ENCODE measurements at regions of chr11 and their contacts with region 1.

Region 1: DNA sequence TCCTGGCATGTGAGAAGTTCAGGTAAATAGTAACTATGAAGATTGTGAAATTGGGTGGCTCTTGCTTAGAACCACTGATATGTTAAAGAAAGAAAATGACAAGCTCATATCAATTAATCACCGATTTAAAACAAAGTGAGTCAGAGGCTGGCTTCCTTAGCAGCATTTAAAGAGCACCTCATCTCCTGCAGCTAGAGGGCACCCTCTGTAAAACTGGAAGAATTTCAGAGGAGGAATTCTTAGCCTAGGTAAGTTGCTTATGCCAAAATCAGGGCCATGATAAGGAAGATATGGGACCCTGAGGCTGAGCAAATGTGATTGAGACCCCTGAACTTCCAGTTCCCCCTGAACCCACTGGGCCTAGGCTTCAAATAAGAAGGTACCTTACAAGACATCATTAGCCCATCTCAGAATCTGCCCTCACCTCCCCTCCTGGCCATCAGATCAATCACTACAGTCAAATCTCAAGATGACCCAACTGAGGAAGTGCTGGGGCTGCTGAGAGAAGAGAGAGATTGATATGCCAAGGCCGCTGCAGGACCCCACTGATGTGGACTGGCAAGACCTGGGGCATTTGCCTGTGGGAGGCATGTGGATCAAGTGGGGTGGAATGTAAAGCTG is 8.6 kb upstream of the CD3E start:
- DNase-seq: peak in 27 of 35 experiments; percentile 8 to 76 (median 36)
- ATAC-seq: peak; percentile 79 to 83 (median 80)
- H3K4me3 ChIP-seq: no peak overlapping the region
- H3K4me3 Mint-ChIP-seq: no peak overlapping the region
- H3K27ac ChIP-seq: peak overlapping the region; percentile 14
- H3K27ac Mint-ChIP-seq: peak overlapping the region; percentile 79 to 80
- H3K4me1 ChIP-seq: peaks cover 0 to 8% of the 10 kb centered on the region in 2 experiments
- H3K4me1 Mint-ChIP-seq: peaks cover 21 to 22% (median 22%) of the 10 kb centered on the region in 3 donors
- H3K27me3 ChIP-seq: no peaks in the 10 kb centered on the region
- H3K27me3 Mint-ChIP-seq: no peaks in the 10 kb centered on the region

Region 2: DNA sequence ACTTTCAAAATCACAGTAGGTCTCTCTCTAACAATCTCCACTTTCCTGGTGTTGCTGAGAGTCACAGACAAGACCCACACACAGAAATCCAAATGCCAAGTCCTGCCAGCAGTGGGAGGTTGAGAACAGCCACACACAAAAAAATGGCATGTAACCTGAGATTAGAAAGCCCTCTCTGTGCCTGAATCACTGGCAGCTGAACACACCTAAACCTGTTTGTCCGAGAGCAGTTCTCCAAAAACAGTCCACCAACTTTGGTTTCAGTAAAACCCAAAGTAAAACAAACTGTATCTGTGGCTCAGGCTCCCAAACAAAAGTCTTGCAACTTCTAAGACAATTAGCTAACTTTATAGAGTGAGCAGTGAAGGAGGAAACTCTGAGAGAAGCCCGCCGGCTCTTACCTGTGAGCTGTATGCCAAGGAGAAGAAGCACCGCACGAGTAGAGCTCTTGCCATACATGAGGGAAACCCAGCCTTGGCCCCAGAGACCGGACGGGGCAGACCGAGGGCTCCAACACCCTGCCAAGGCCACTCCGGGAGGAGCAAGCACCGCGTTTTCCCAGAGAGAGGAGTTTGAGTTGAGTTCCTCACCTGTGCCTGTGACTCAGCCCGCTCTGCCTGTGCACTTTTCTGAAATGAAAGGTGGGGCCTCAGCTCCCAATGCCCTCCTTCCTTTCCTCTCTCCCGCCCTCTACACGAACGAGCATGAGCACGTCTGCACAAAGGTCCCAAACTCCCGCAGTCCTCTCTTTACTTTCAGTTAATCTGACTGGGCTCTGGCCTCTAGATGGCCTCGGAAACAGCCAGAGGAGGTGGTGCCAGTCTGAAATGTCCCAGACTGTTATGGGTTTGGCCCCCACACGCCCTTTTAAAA is 32.0 kb before region 1 on chr11 and contains the start of gene MPZL2:
- CTCF ChIA-PET with region 1: interaction called in 1 of 2 experiments, 4 read pairs
- POLR2A ChIA-PET with region 1: interaction called in 1 of 2 experiments, 10 read pairs
- DNase-seq: peak in 9 of 35 experiments; percentile 6 to 35 (median 21)
- ATAC-seq: peak; percentile 70 to 80 (median 75)
- H3K4me3 ChIP-seq: peak within 1 kb of the TSS; percentile 27 to 69
- H3K4me3 Mint-ChIP-seq: peak within 1 kb of the TSS; percentile 71 to 85 (median 72)
- H3K27ac ChIP-seq: no peak within 1 kb of the TSS
- H3K27ac Mint-ChIP-seq: peak within 1 kb of the TSS; percentile 76 to 81
- H3K4me1 ChIP-seq: peaks cover 8 to 13% of the 10 kb centered on the region in 2 experiments
- H3K4me1 Mint-ChIP-seq: peaks cover 29 to 46% (median 30%) of the 10 kb centered on the region in 3 donors
- H3K27me3 ChIP-seq: no peaks in the 10 kb centered on the region
- H3K27me3 Mint-ChIP-seq: peaks cover 0 to 3% of the 10 kb centered on the region in 2 donors
- total RNA-seq, gene MPZL2: 0.85 to 5.6 (median 2.0) TPM

Region 3: GRCh38 chr11:118311518-118311917 is 15.6 kb after region 1 on chr11:
- CTCF ChIA-PET with region 1: interaction called, 11 to 15 read pairs
- POLR2A ChIA-PET with region 1: interaction called in 1 of 2 experiments, 5 read pairs
- DNase-seq: peak in 1 of 35 experiments; percentile 49
- ATAC-seq: peak in 1 of 4 experiments; percentile 26
- H3K4me3 ChIP-seq: no peak overlapping the region
- H3K4me3 Mint-ChIP-seq: peak overlapping the region in 2 of 3 donors; percentile 28 to 31
- H3K27ac ChIP-seq: peak overlapping the region; percentile 61
- H3K27ac Mint-ChIP-seq: peak overlapping the region; percentile 85 to 92
- H3K4me1 ChIP-seq: peaks cover 67 to 79% of the 10 kb centered on the region in 2 experiments
- H3K4me1 Mint-ChIP-seq: peaks cover 90 to 94% (median 91%) of the 10 kb centered on the region in 3 donors
- H3K27me3 ChIP-seq: no peaks in the 10 kb centered on the region
- H3K27me3 Mint-ChIP-seq: no peaks in the 10 kb centered on the region

Region 4: GRCh38 chr11:118359295-118359958 is 63.5 kb after region 1 on chr11 and contains the start of gene UBE4A:
- CTCF ChIA-PET with region 1: interaction called, 6 to 12 read pairs
- POLR2A ChIA-PET with region 1: no interaction called
- DNase-seq: peak; percentile 89 to 99 (median 96)
- ATAC-seq: peak; percentile 91 to 96 (median 94)
- H3K4me3 ChIP-seq: peak within 1 kb of the TSS; percentile 71 to 88
- H3K4me3 Mint-ChIP-seq: peak within 1 kb of the TSS; percentile 98 to 99 (median 99)
- H3K27ac ChIP-seq: peak within 1 kb of the TSS; percentile 82
- H3K27ac Mint-ChIP-seq: peak within 1 kb of the TSS; percentile 97 to 99
- H3K4me1 ChIP-seq: peaks cover 14 to 30% of the 10 kb centered on the region in 2 experiments
- H3K4me1 Mint-ChIP-seq: peaks cover 49 to 52% (median 50%) of the 10 kb centered on the region in 3 donors
- H3K27me3 ChIP-seq: no peaks in the 10 kb centered on the region
- H3K27me3 Mint-ChIP-seq: no peaks in the 10 kb centered on the region
- total RNA-seq, gene UBE4A: 40.7 to 44.9 (median 41.8) TPM

Measured in T-cell (primary cell).